Heart right ventricle (tissue), 16 donors: ENCODE measurements at regions of chr3 and their contacts with region 1.

Region 1: DNA sequence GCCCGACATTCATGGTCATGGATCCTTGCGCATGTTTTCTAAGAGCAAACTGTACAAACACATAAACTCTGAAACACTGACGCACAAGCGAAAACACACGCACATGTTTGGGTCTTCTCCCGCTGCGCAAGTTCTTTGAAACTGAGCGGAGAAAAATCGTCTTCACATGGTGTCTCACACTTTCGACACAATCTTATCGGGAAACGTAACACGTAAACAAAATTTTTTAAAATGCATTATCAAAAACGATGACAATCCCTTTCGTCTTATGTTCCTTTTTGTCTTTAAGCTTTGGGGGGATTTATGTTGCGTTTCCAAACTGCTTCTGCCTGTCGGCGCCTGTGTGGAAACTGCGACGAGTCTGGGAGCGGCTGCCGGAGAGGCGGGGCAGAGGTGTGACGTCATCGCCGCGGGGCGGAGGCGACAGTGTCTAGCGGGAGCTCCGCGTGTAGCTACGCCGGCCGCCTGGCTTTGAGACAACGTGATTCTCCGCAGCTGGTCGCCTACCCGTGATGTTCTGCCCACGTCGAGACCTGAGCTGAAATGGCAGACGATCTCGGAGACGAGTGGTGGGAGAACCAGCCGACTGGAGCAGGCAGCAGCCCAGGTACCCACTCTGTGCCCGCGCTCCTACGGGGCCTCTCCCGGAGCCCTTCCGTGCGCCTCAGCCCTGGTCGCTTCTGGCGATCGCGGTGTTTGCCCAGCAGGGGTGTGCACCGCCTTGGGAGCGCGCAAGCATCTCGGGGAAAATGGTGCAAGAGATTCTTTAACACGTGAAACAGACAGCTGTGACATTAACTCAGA is at the start of gene CMSS1:
- DNase-seq: peak; percentile 95 to 96
- ATAC-seq: peak; percentile 98 to 99 (median 98)
- H3K4me3 ChIP-seq: peak within 1 kb of the TSS; percentile 61 to 93 (median 74)
- H3K27ac ChIP-seq: peak within 1 kb of the TSS; percentile 78 to 93 (median 87)
- H3K4me1 ChIP-seq: peaks cover 0 to 23% (median 19%) of the 10 kb centered on the region in 9 donors
- H3K27me3 ChIP-seq: no peaks in the 10 kb centered on the region
- CTCF ChIP-seq: peak in 5 of 9 donors; percentile 16 to 44 (median 22)
- total RNA-seq, gene CMSS1: 24.6 to 45.4 (median 34.2) TPM

Region 2: DNA sequence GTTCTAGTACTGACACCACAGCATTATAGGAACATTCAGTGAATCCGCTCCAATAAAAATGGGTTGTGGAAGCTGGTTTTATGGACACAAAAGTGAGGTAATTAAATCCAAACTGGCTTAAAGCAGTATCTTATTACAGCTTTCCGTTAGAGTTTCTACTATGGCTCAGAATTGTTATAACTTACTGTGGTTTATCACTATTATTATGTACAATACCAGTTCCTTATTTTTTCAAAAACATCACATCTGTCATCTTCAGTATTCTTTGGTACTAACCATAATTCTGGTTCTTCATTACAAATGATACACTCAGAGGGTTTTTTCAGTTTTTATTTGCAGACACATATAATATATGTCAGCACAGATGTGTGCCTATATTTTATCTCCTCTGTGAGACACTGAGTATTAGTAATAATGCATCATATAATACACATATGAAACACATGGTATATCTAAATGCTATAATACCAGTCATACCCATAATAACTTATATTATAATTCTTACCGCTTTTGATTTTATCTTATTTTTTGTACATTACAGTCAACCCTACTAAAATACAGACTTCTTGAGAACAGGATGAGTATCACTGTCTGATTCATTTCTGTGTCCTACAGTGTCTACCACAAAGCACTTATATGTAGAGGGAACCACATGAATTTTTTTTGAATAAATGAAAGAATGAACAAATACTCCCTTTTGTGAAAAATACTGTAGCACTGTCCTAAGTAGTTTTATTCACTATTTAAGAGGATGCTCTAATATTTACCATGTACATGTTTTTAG is 39.0 kb after region 1 on chr3:
- intact Hi-C with region 1: loop called in 1 of 10 experiments (anchors 1 kb)
- DNase-seq: no peak
- ATAC-seq: no peak
- H3K4me3 ChIP-seq: no peak overlapping the region
- H3K27ac ChIP-seq: no peak overlapping the region
- H3K4me1 ChIP-seq: peaks cover 0 to 79% (median 36%) of the 10 kb centered on the region in 9 donors
- H3K27me3 ChIP-seq: no peaks in the 10 kb centered on the region
- CTCF ChIP-seq: no peak

Region 3: GRCh38 chr3:100710261-100710968 is 892.8 kb after region 1 on chr3:
- intact Hi-C with region 1: loop called in 1 of 10 experiments (anchors 10 kb)
- DNase-seq: peak in 1 of 2 donors; percentile 19
- ATAC-seq: no peak
- H3K4me3 ChIP-seq: peak overlapping the region; percentile 69 to 86 (median 80)
- H3K27ac ChIP-seq: peak overlapping the region; percentile 73 to 98 (median 95)
- H3K4me1 ChIP-seq: peaks cover 3 to 56% (median 43%) of the 10 kb centered on the region in 9 donors
- H3K27me3 ChIP-seq: peaks cover 0 to 9% (median 6%) of the 10 kb centered on the region in 7 donors
- CTCF ChIP-seq: peak in 1 of 9 donors; percentile 22